Heart right ventricle (tissue), 16 donors: ENCODE measurements at regions of chr6 and their contacts with region 1.

Region 1: GRCh38 chr6:25992413-25993037 is 29.9 kb downstream of the TRIM38 start:
- DNase-seq: peak; percentile 95 to 98
- ATAC-seq: peak; percentile 96 to 100 (median 98)
- H3K4me3 ChIP-seq: peak overlapping the region; percentile 37 to 74 (median 60)
- H3K27ac ChIP-seq: peak overlapping the region; percentile 76 to 96 (median 88)
- H3K4me1 ChIP-seq: peaks cover 0 to 19% (median 15%) of the 10 kb centered on the region in 9 donors
- H3K27me3 ChIP-seq: no peaks in the 10 kb centered on the region
- CTCF ChIP-seq: peak; percentile 95 to 100 (median 100)

Region 2: DNA sequence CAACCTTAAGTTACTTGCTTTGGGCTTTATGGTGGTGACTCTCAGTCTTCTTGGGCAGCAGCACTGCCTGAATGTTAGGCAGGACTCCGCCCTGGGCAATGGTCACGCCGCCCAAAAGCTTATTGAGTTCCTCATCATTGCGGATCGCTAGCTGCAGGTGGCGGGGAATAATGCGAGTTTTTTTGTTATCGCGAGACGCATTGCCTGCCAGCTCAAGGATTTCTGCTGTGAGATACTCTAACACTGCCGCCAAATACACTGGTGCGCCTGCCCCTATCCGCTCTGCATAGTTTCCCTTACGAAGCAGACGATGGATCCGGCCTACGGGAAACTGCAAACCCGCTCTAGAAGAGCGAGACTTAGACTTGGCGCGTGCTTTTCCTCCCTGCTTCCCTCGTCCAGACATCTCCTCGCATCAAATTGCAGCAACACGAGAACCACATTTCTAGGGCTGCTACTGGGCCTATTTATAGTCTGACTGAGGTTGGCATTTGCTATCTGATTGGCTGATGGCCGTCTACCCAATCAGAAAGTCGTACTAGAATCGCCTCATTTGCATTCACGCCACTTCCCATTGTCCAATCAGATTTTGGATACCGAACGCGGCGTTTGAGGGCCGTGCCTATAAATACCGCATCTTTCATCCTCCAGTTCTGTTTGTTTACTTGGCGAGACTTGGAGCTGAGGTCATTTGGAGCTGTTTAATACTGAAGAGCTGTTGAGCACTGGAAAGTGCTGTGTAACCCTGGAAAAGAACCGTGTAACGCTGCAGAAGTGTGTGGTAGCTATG is 266.2 kb before region 1 on chr6:
- intact Hi-C with region 1: loop called in 1 of 10 experiments (anchors 10 kb)
- DNase-seq: no peak
- ATAC-seq: no peak
- H3K4me3 ChIP-seq: no peak overlapping the region
- H3K27ac ChIP-seq: no peak overlapping the region
- H3K4me1 ChIP-seq: no peaks in the 10 kb centered on the region
- H3K27me3 ChIP-seq: peaks cover 0 to 40% (median 10%) of the 10 kb centered on the region in 7 donors
- CTCF ChIP-seq: no peak

Region 3: DNA sequence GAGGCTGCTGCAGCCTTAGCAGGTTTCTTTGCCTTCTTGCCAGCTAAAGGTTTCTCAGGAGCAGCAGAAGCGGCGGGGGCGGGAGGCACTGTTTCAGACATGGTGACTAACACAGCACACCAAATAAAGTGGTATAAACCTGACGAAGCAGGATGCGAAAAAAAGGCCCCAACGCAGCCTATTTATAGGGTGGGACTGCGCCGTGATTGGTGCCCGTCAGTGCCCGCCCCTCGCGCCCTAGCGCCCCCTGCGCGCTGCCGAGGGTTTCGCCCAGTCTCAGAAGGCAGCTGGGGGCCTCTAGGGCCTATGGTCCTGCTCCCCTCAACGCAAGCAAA is 25.1 kb after region 1 on chr6:
- intact Hi-C with region 1: loop called in 1 of 10 experiments (anchors 2 kb)
- DNase-seq: peak; percentile 70 to 78
- ATAC-seq: peak in 7 of 8 donors; percentile 0 to 48 (median 26)
- H3K4me3 ChIP-seq: peak overlapping the region; percentile 25 to 61 (median 52)
- H3K27ac ChIP-seq: peak overlapping the region; percentile 59 to 89 (median 84)
- H3K4me1 ChIP-seq: peaks cover 0 to 39% (median 12%) of the 10 kb centered on the region in 9 donors
- H3K27me3 ChIP-seq: no peaks in the 10 kb centered on the region
- CTCF ChIP-seq: peak; percentile 13 to 68 (median 44)